Activated CD8-positive, alpha-beta T cell treated with anti-CD3 and anti-CD28 coated beads, Interleukin-2, amount 10 ng/mL, durations not matched to agents 7 days and 5 days (primary cell): ENCODE measurements at regions of chr11 and their contacts with region 1.

Region 1: GRCh38 chr11:118592616-118593367 is 14.6 kb upstream of the PHLDB1 start:
- DNase-seq: no peak
- ATAC-seq: no peak
- H3K4me3 Mint-ChIP-seq: no peak overlapping the region
- H3K27ac Mint-ChIP-seq: no peak overlapping the region
- H3K4me1 Mint-ChIP-seq: peaks cover 23% of the 10 kb centered on the region
- H3K27me3 Mint-ChIP-seq: no peaks in the 10 kb centered on the region

Region 2: DNA sequence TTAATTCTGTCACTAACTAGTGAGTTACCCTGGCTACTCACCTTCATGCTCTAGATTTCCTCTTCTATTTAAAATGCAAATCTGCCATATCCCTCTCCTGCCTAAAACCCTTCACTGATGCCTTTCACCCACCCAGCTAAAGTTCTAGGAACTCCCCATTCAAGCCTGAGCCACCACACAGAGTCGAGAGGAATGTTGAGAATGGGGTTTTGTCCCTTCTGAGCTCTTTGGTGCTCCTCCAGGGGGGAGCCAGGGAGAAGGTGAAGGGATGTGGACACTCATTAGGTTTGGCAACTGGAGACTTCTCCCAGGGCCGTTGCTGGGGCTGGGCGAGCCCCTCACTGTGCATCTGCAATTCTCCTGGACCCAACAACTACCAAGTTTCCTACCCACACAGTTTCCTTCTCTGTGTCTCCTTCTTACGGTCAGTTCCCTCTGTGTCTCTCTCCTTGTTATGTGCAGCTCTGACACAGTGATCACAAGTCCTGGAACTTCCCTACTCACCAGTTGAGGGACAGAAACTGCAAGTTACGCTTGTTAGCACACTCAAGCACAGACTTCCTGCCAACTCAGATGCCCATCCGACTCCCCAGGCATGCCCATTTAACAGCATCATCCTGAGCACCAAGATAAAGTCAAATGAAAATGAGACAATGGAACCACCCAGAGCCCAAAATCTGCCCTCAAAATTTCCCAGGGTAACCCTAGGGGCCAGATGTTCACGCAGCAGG is 613.1 kb before region 1 on chr11:
- CTCF ChIA-PET with region 1: no interaction called
- POLR2A ChIA-PET with region 1: no interaction called
- DNase-seq: no peak
- ATAC-seq: peak; percentile 32
- H3K4me3 Mint-ChIP-seq: no peak overlapping the region
- H3K27ac Mint-ChIP-seq: peak overlapping the region; percentile 81
- H3K4me1 Mint-ChIP-seq: peaks cover 81% of the 10 kb centered on the region
- H3K27me3 Mint-ChIP-seq: no peaks in the 10 kb centered on the region

Region 3: DNA sequence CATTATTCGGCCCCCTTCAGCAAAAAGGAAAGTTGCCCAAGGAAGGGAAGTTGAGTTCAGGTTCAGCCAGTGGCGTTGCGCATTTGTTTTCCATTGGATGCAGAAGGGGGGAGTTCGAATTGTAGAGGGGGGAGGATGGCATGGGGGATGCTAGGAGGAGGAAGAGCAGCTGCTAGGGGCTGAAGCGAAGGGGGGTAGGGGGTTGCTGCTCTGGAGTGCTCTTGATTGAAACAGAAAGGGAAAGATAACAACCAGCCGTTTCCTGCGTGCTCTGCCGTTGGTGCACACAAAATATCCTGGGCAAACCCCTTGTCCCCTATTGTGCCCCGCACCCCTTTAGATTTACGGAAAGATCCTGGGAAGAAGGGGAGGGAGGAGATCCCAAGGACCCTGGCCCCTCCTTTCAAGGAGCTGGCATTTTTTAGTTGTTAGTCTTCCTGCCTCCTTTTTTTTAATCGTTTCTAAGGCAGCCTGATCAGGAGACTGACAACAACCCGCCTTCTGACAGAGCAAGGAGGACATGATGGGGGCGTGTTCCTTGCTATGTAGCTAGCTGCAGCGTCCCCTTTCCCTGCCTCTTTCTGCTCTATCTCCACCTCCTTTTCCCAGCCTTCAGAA is 154.4 kb before region 1 on chr11:
- CTCF ChIA-PET with region 1: no interaction called
- POLR2A ChIA-PET with region 1: no interaction called
- DNase-seq: peak; percentile 74
- ATAC-seq: peak; percentile 26
- H3K4me3 Mint-ChIP-seq: peak overlapping the region; percentile 89
- H3K27ac Mint-ChIP-seq: peak overlapping the region; percentile 89
- H3K4me1 Mint-ChIP-seq: peaks cover 64% of the 10 kb centered on the region
- H3K27me3 Mint-ChIP-seq: no peaks in the 10 kb centered on the region

Region 4: GRCh38 chr11:118572061-118572980 is 20.5 kb before region 1 on chr11 and contains the start of gene ARCN1:
- CTCF ChIA-PET with region 1: interaction called, 13 read pairs
- POLR2A ChIA-PET with region 1: interaction called, 3 read pairs
- DNase-seq: peak; percentile 84
- ATAC-seq: peak; percentile 84
- H3K4me3 Mint-ChIP-seq: peak within 1 kb of the TSS; percentile 94
- H3K27ac Mint-ChIP-seq: peak within 1 kb of the TSS; percentile 91
- H3K4me1 Mint-ChIP-seq: peaks cover 45% of the 10 kb centered on the region
- H3K27me3 Mint-ChIP-seq: no peaks in the 10 kb centered on the region
- total RNA-seq, gene ARCN1: 106 to 109 TPM

Region 5: GRCh38 chr11:118581057-118581456 is 11.7 kb before region 1 on chr11:
- CTCF ChIA-PET with region 1: interaction called, 14 read pairs
- POLR2A ChIA-PET with region 1: no interaction called
- DNase-seq: no peak
- ATAC-seq: no peak
- H3K4me3 Mint-ChIP-seq: no peak overlapping the region
- H3K27ac Mint-ChIP-seq: no peak overlapping the region
- H3K4me1 Mint-ChIP-seq: peaks cover 14% of the 10 kb centered on the region
- H3K27me3 Mint-ChIP-seq: no peaks in the 10 kb centered on the region

Region 6: GRCh38 chr11:118610804-118611795 is 18.3 kb after region 1 on chr11:
- CTCF ChIA-PET with region 1: interaction called, 168 read pairs
- POLR2A ChIA-PET with region 1: interaction called, 3 read pairs
- DNase-seq: peak; percentile 85
- ATAC-seq: peak; percentile 71
- H3K4me3 Mint-ChIP-seq: peak overlapping the region; percentile 55
- H3K27ac Mint-ChIP-seq: no peak overlapping the region
- H3K4me1 Mint-ChIP-seq: peaks cover 26% of the 10 kb centered on the region
- H3K27me3 Mint-ChIP-seq: peaks cover 23% of the 10 kb centered on the region

Region 7: DNA sequence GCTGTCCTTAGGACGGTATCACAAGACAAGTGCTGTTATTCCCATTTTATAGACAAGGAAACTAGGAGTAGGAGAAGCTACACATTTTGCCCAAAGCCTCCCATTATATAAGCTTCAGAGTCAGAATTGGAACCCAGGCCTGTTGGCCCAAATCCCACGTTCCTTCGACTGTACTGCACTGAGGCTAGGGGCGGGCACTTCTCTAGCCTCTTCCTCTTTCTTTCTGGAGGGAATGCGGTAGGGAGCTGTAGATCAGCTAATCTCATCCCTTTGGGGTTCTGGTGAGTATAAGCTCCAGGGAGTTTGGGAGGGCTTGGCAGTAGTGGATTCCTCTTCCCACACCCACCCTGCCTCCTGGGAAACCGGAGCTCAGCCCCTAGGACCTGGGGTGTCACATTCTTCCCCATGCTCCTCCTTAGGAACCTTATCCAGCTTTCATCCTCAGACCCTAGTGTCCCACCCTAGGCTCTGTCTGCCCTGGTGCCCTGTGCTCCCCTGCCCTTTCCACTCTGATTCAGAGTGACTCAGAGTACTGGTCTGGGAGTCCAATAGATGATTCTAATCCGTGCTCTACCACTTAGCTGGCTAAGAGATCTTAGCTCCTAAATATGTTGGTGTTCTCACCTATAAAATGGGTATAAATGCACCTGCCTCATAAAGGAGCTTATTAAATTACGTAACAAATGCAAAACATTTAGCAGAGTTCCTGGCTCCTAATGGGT is 43.9 kb after region 1 on chr11:
- CTCF ChIA-PET with region 1: interaction called, 12 read pairs
- POLR2A ChIA-PET with region 1: no interaction called
- DNase-seq: no peak
- ATAC-seq: no peak
- H3K4me3 Mint-ChIP-seq: no peak overlapping the region
- H3K27ac Mint-ChIP-seq: no peak overlapping the region
- H3K4me1 Mint-ChIP-seq: peaks cover 3% of the 10 kb centered on the region
- H3K27me3 Mint-ChIP-seq: peaks cover 4% of the 10 kb centered on the region

Region 8: GRCh38 chr11:118659314-118659952 is 66.6 kb after region 1 on chr11:
- CTCF ChIA-PET with region 1: interaction called, 40 read pairs
- POLR2A ChIA-PET with region 1: no interaction called
- DNase-seq: peak; percentile 94
- ATAC-seq: peak; percentile 94
- H3K4me3 Mint-ChIP-seq: no peak overlapping the region
- H3K27ac Mint-ChIP-seq: no peak overlapping the region
- H3K4me1 Mint-ChIP-seq: peaks cover 9% of the 10 kb centered on the region
- H3K27me3 Mint-ChIP-seq: no peaks in the 10 kb centered on the region